ENCODE measurements at regions of chr12 and their contacts with region 1.

Region 1: GRCh38 chr12:68932961-68933893 is at the start of gene CPM:
- DNase-seq: peak; percentile 61 to 77 (median 62)
- H3K4me3 ChIP-seq: peak within 1 kb of the TSS; percentile 61 to 89 (median 85)
- H3K4me3 Mint-ChIP-seq: peak within 1 kb of the TSS; percentile 85 to 98
- H3K27ac ChIP-seq: peak within 1 kb of the TSS; percentile 76 to 88
- H3K27ac Mint-ChIP-seq: peak within 1 kb of the TSS; percentile 87 to 91 (median 90)
- H3K4me1 ChIP-seq: peaks cover 12 to 22% of the 10 kb centered on the region in 2 donors
- H3K4me1 Mint-ChIP-seq: peaks cover 19% of the 10 kb centered on the region
- H3K27me3 ChIP-seq: peaks cover 7 to 14% of the 10 kb centered on the region in 2 donors
- H3K27me3 Mint-ChIP-seq: peaks cover 15 to 20% (median 20%) of the 10 kb centered on the region in 3 donors
- CTCF ChIP-seq: no peak
- polyA plus RNA-seq, gene CPM: 8.4 to 32.4 (median 26.2) TPM

Region 2: GRCh38 chr12:68899251-68899771 is 33.9 kb before region 1 on chr12:
- intact Hi-C with region 1: no loop called
- DNase-seq: no peak
- H3K4me3 ChIP-seq: no peak overlapping the region
- H3K4me3 Mint-ChIP-seq: no peak overlapping the region
- H3K27ac ChIP-seq: no peak overlapping the region
- H3K27ac Mint-ChIP-seq: peak overlapping the region in 2 of 7 donors; percentile 1 to 8
- H3K4me1 ChIP-seq: peaks cover 8 to 17% of the 10 kb centered on the region in 2 donors
- H3K4me1 Mint-ChIP-seq: peaks cover 17% of the 10 kb centered on the region
- H3K27me3 ChIP-seq: no peaks in the 10 kb centered on the region
- H3K27me3 Mint-ChIP-seq: peaks cover under 1 to 1% (median 1%) of the 10 kb centered on the region in 3 donors
- CTCF ChIP-seq: no peak

Region 3: GRCh38 chr12:69007101-69007854 is 74.1 kb after region 1 on chr12:
- intact Hi-C with region 1: loop called (anchors 10 kb)
- DNase-seq: peak; percentile 81 to 91 (median 88)
- H3K4me3 ChIP-seq: peak overlapping the region; percentile 41 to 95 (median 71)
- H3K4me3 Mint-ChIP-seq: peak overlapping the region; percentile 61 to 86
- H3K27ac ChIP-seq: peak overlapping the region; percentile 89 to 97
- H3K27ac Mint-ChIP-seq: peak overlapping the region; percentile 95 to 99 (median 98)
- H3K4me1 ChIP-seq: peaks cover 34 to 39% of the 10 kb centered on the region in 2 donors
- H3K4me1 Mint-ChIP-seq: peaks cover 37% of the 10 kb centered on the region
- H3K27me3 ChIP-seq: no peaks in the 10 kb centered on the region
- H3K27me3 Mint-ChIP-seq: peaks cover 0 to 5% (median 0%) of the 10 kb centered on the region in 3 donors
- CTCF ChIP-seq: no peak

Region 4: GRCh38 chr12:69059483-69060457 is 126.5 kb after region 1 on chr12:
- intact Hi-C with region 1: loop called (anchors 10 kb)
- DNase-seq: peak; percentile 76 to 90 (median 85)
- H3K4me3 ChIP-seq: no peak overlapping the region
- H3K4me3 Mint-ChIP-seq: no peak overlapping the region
- H3K27ac ChIP-seq: peak overlapping the region in 1 of 2 donors; percentile 47
- H3K27ac Mint-ChIP-seq: peak overlapping the region; percentile 12 to 85 (median 70)
- H3K4me1 ChIP-seq: peaks cover 29 to 35% of the 10 kb centered on the region in 2 donors
- H3K4me1 Mint-ChIP-seq: peaks cover 40% of the 10 kb centered on the region
- H3K27me3 ChIP-seq: no peaks in the 10 kb centered on the region
- H3K27me3 Mint-ChIP-seq: peaks cover 0 to 2% (median 0%) of the 10 kb centered on the region in 3 donors
- CTCF ChIP-seq: no peak